Activated CD4-positive, alpha-beta memory T cell treated with anti-CD3 and anti-CD28 coated beads for 36 hours (primary cell): ENCODE measurements at regions of chr3 and their contacts with region 1.

Region 1: DNA sequence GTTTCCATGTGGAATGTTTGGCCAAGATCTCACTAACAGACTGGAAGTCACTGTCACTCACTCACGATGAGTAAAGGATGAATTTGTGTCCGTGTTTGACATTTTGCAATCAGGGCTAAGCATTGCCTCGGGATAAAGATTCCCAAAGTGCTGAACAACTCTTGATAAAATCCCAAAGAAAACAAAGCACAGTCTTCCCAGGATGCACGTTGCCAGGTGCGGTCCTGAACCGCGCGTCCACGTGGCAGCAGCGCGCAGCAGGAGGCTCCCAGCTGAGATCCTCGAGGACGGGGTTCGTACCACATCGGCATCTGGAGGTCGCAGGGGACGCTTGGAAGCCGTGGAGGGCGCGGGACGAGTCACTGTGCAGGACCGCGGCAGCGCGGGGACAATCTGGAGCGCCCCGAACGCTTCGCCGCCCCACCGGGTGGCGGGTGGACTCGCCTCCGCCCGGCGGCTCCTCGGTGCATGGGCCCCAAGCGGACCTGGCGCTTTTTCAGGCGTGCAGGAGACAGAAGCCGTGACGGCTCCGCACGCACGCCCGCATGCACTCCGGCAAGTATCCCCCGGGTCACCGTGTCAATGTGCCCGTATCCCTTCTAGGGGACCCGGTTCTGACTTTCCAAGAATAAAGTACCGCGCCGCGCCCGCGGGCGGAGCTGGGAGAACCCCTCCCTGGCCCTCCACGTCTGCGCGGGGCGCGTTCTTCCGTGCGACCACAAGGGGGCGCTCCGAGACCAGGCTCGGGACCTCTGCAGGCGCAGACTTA is 17.7 kb downstream of the CPN2 start:
- DNase-seq: peak; percentile 92
- H3K4me3 Mint-ChIP-seq: peak overlapping the region; percentile 65
- H3K27ac Mint-ChIP-seq: no peak overlapping the region
- H3K4me1 Mint-ChIP-seq: peaks cover 5% of the 10 kb centered on the region
- H3K27me3 Mint-ChIP-seq: peaks cover 25% of the 10 kb centered on the region

Region 2: DNA sequence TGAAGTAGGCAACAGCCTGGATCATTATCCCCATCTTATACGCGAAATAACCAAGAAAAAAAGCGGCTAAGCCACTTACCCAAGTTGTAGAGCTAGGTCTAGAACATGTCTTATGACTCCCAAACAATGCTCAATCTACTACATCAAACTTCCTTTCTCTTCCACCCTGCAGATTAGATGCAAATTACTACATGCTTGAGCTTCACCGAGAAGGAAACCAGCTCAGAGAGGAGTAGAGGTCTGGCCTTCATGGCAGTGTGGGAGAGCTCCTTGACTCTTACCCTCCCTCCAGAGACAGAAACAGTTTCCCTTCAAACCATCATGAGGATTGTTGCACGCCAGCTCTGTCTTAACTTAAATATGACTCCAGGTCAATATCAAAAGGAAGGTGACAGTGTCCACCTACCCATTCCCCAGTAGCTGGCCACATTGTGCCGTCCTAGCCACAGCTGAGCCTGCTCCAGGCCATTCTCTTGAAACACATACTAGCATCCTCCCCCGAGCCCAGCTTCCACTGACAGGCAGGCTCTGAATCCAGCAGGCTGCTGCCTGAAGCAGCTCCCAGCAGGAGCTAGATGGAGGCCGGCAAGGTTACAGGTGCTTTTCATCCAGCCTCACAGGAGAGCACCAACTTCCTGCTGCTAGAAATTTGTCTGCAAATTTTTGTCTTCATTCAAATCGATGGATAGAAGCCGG is 39.0 kb before region 1 on chr3:
- CTCF ChIA-PET with region 1: no interaction called
- POLR2A ChIA-PET with region 1: no interaction called
- intact Hi-C with region 1: no loop called
- DNase-seq: no peak
- H3K4me3 Mint-ChIP-seq: no peak overlapping the region
- H3K27ac Mint-ChIP-seq: no peak overlapping the region
- H3K4me1 Mint-ChIP-seq: no peaks in the 10 kb centered on the region
- H3K27me3 Mint-ChIP-seq: peaks cover 5% of the 10 kb centered on the region

Region 3: DNA sequence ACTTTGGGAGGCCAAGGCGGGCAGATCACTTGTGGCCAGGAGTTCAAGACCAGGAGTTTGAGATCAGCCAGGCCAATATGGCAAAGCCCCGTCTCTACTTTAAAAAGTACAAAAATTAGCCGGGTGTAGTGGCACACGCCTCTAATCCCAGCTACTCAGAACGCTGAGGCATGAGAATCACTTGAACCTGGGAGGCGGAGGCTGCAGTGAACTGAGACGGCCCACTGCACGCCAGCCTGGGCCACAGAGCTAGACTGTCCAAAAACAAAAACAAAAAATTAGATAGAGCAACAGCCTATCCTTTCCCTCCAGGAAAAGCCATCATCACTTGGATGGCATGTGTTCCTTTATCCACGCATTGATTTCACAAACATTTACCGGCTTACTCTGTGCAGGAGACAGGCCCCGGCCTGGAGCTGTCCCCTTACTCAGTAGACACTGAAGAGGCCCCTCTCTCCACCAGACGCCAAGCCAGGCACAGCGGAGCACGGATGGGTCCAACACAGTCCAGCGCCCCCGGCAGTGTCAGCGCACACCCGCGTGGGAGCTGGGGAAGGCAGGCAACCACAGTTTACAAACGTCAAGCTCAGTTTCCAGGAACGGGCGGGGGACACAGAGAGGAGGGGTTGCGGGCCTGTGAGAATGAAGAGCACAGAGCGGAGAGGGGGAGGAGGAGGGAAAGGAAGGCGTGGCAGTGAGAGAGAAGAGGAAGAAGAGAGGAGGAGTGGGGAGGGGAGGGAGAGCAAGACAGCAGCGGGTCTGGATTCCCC is 62.6 kb after region 1 on chr3:
- CTCF ChIA-PET with region 1: interaction called, 47 read pairs
- POLR2A ChIA-PET with region 1: interaction called, 3 read pairs
- intact Hi-C with region 1: no loop called
- DNase-seq: peak; percentile 74
- H3K4me3 Mint-ChIP-seq: peak overlapping the region; percentile 44
- H3K27ac Mint-ChIP-seq: peak overlapping the region; percentile 49
- H3K4me1 Mint-ChIP-seq: peaks cover 51% of the 10 kb centered on the region
- H3K27me3 Mint-ChIP-seq: peaks cover 33% of the 10 kb centered on the region

Region 4: GRCh38 chr3:194592798-194593752 is 259.7 kb after region 1 on chr3:
- CTCF ChIA-PET with region 1: interaction called, 5 read pairs
- POLR2A ChIA-PET with region 1: no interaction called
- intact Hi-C with region 1: loop called (anchors 2 kb)
- DNase-seq: no peak
- H3K4me3 Mint-ChIP-seq: no peak overlapping the region
- H3K27ac Mint-ChIP-seq: no peak overlapping the region
- H3K4me1 Mint-ChIP-seq: peaks cover 4% of the 10 kb centered on the region
- H3K27me3 Mint-ChIP-seq: no peaks in the 10 kb centered on the region

Region 5: DNA sequence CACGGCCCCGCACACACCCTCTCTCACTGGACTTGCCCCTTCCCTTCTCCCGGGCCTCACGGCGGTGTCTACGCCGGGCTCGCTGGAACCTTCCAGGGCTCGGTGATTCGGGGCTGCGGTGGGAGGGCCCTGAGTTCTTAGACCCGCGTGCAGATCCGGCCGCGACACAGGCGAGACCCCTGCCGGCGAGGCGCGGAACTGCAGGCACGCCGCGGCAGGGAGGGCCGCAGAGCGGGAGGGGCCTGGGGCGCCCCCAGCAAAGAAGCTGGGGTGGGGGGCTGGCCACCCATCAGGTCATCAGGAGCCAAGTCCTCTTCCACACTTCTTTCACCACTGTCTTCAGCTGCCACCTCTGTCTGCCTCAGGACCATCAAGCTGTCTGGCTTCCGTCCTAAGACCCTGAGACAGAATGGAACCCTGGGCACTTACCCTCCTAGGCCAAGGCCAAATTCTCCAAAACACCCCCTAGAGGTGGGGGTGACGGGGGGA is 773.1 kb after region 1 on chr3:
- CTCF ChIA-PET with region 1: no interaction called
- POLR2A ChIA-PET with region 1: no interaction called
- intact Hi-C with region 1: loop called (anchors 5 kb)
- DNase-seq: peak; percentile 71
- H3K4me3 Mint-ChIP-seq: no peak overlapping the region
- H3K27ac Mint-ChIP-seq: no peak overlapping the region
- H3K4me1 Mint-ChIP-seq: peaks cover 4% of the 10 kb centered on the region
- H3K27me3 Mint-ChIP-seq: no peaks in the 10 kb centered on the region